ENCODE measurements at regions of chr5 and their contacts with region 1.

Region 1: GRCh38 chr5:84255315-84255714 is 129.4 kb downstream of the EDIL3 start:
- DNase-seq: no peak
- H3K4me3 ChIP-seq: no peak overlapping the region
- H3K27ac ChIP-seq: no peak overlapping the region
- H3K4me1 ChIP-seq: no peaks in the 10 kb centered on the region
- H3K27me3 ChIP-seq: no peaks in the 10 kb centered on the region
- CTCF ChIP-seq: no peak
- POLR2A ChIP-seq: no peak

Region 2: GRCh38 chr5:83721953-83722901 is 533.1 kb before region 1 on chr5:
- intact Hi-C with region 1: loop called (anchors 10 kb)
- DNase-seq: peak; percentile 72
- H3K4me3 ChIP-seq: peak overlapping the region in 7 of 8 donors; percentile 23 to 65 (median 32)
- H3K27ac ChIP-seq: no peak overlapping the region
- H3K4me1 ChIP-seq: peaks cover 9 to 19% (median 10%) of the 10 kb centered on the region in 6 donors
- H3K27me3 ChIP-seq: peaks cover 4 to 71% (median 31%) of the 10 kb centered on the region in 7 donors
- CTCF ChIP-seq: no peak
- POLR2A ChIP-seq: no peak

Region 3: DNA sequence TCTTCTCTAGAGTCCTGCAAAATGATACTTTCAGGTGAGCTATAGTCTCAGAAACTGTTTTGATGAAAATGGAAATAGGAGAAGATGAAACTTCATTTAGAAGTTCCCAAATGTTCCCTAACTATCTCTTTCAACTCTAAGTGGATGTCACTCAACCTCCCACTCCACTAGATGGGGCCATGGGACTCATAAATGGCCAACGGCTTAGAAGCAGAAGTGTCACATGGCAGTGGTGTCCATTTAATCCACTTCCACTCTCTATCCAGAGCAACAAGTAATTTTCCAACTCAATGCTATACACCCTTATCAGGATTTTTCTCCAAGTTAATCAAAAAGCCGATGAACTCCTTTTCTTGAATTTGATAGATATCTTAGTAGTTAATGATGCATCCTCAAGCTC is 166.3 kb before region 1 on chr5:
- intact Hi-C with region 1: no loop called
- DNase-seq: no peak
- H3K4me3 ChIP-seq: no peak overlapping the region
- H3K27ac ChIP-seq: no peak overlapping the region
- H3K4me1 ChIP-seq: no peaks in the 10 kb centered on the region
- H3K27me3 ChIP-seq: no peaks in the 10 kb centered on the region
- CTCF ChIP-seq: no peak
- POLR2A ChIP-seq: no peak